Activated B cell treated with CpG ODN at 0.5 μM for 24 hours (primary cell): ENCODE measurements at regions of chr10 and their contacts with region 1.

Region 1: DNA sequence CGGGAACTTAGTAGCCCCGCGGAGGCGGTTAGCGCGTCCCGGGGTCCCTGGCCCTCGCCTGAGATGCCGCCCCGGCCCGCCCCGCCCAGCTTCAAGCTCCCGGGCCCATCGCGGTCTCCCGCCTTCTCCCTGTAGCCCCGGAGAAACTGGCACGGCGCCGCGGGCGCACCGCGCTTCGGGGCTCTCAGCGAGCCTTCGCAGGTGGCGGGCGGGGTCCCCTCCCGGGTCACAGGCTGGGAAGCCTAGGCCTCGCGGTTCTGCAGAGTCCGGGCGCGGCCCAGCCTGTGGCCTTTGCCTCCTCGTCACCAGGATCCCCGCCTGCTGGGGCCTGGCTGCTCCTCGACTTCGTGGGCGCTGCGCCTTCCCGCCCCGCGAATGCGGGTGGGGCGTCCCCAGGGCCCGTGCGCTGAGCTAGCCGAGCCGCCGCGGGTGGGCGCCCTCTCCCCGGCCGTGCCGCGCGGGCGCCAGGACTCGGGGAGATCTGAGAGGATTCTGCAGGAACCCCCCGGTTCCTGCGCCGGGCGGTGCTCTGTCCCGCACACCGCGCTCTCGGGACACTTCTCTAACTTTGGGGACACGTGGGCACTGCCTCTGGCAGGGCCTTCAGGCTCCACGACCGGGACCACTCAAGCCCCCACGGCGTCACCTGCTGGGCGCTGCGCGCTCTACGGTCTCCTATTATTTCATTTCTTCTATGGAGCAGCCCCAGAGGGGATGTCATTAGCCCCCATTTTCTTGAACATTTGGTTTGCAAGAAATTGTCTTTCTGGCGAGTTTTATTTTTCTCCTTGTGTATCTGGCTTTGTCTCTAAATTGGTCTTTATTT is 682 bp upstream of the RGS10 start:
- DNase-seq: peak; percentile 61
- ATAC-seq: peak; percentile 53
- H3K4me3 Mint-ChIP-seq: peak overlapping the region; percentile 91
- H3K27ac Mint-ChIP-seq: peak overlapping the region; percentile 87
- H3K4me1 Mint-ChIP-seq: peaks cover 38% of the 10 kb centered on the region
- H3K27me3 Mint-ChIP-seq: peaks cover 9% of the 10 kb centered on the region
- CTCF ChIP-seq: no peak

Region 2: GRCh38 chr10:118116715-118117449 is 1426.3 kb before region 1 on chr10:
- CTCF ChIA-PET with region 1: no interaction called
- POLR2A ChIA-PET with region 1: no interaction called
- intact Hi-C with region 1: no loop called
- DNase-seq: no peak
- ATAC-seq: no peak
- H3K4me3 Mint-ChIP-seq: no peak overlapping the region
- H3K27ac Mint-ChIP-seq: no peak overlapping the region
- H3K4me1 Mint-ChIP-seq: no peaks in the 10 kb centered on the region
- H3K27me3 Mint-ChIP-seq: peaks cover 5% of the 10 kb centered on the region
- CTCF ChIP-seq: no peak

Region 3: GRCh38 chr10:119178372-119179119 is 364.7 kb before region 1 on chr10 and contains the start of gene PRDX3:
- CTCF ChIA-PET with region 1: no interaction called
- POLR2A ChIA-PET with region 1: no interaction called
- intact Hi-C with region 1: loop called (anchors 5 kb)
- DNase-seq: peak; percentile 92
- ATAC-seq: peak; percentile 99
- H3K4me3 Mint-ChIP-seq: peak within 1 kb of the TSS; percentile 98
- H3K27ac Mint-ChIP-seq: peak within 1 kb of the TSS; percentile 93
- H3K4me1 Mint-ChIP-seq: peaks cover 26% of the 10 kb centered on the region
- H3K27me3 Mint-ChIP-seq: no peaks in the 10 kb centered on the region
- CTCF ChIP-seq: no peak
- total RNA-seq, gene PRDX3: 62.8 and 63.7 TPM in 2 replicates

Region 4: GRCh38 chr10:119416855-119417254 is 126.3 kb before region 1 on chr10:
- CTCF ChIA-PET with region 1: interaction called, 3 read pairs
- POLR2A ChIA-PET with region 1: no interaction called
- intact Hi-C with region 1: loop called (anchors 1 kb)
- DNase-seq: peak; percentile 57
- ATAC-seq: peak; percentile 92
- H3K4me3 Mint-ChIP-seq: no peak overlapping the region
- H3K27ac Mint-ChIP-seq: no peak overlapping the region
- H3K4me1 Mint-ChIP-seq: peaks cover 2% of the 10 kb centered on the region
- H3K27me3 Mint-ChIP-seq: no peaks in the 10 kb centered on the region
- CTCF ChIP-seq: peak; percentile 22

Region 5: DNA sequence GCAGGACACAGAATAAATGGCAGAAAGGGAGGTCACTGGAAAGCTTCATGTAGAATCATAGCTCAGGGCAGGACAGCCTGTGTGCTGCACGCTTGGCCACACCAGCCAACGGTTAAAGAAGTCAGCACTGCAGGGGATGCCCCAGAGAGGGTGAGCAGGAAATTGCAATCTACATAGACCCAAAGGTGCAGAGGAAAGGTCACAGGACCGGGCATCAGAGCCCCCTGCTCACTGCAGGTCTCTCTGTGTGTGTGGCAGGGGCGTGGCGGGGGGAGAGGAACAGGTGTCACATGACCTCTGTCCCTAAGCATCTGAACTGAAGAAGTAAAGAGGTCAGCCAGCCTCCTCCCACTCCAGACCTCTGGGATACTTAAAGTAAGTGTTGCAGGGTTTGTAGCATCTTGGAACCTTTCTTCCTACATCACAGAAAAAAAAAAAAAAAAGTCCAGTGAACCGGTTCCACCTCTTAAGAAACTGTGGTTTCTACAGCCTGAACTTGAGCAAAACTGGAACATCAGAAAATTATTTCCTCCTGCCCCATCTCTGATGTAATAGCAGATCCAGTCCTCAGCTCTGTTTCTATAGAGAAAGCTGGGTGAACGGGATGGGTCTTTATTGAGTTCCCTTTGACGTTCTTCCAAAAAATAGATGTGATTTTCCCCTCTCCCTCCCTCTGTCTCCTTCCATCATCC is 64.9 kb before region 1 on chr10:
- CTCF ChIA-PET with region 1: interaction called, 4 read pairs
- POLR2A ChIA-PET with region 1: no interaction called
- intact Hi-C with region 1: loop called (anchors 1 kb)
- DNase-seq: peak; percentile 66
- ATAC-seq: peak; percentile 96
- H3K4me3 Mint-ChIP-seq: peak overlapping the region; percentile 68
- H3K27ac Mint-ChIP-seq: peak overlapping the region; percentile 93
- H3K4me1 Mint-ChIP-seq: peaks cover 40% of the 10 kb centered on the region
- H3K27me3 Mint-ChIP-seq: no peaks in the 10 kb centered on the region
- CTCF ChIP-seq: no peak

Region 6: DNA sequence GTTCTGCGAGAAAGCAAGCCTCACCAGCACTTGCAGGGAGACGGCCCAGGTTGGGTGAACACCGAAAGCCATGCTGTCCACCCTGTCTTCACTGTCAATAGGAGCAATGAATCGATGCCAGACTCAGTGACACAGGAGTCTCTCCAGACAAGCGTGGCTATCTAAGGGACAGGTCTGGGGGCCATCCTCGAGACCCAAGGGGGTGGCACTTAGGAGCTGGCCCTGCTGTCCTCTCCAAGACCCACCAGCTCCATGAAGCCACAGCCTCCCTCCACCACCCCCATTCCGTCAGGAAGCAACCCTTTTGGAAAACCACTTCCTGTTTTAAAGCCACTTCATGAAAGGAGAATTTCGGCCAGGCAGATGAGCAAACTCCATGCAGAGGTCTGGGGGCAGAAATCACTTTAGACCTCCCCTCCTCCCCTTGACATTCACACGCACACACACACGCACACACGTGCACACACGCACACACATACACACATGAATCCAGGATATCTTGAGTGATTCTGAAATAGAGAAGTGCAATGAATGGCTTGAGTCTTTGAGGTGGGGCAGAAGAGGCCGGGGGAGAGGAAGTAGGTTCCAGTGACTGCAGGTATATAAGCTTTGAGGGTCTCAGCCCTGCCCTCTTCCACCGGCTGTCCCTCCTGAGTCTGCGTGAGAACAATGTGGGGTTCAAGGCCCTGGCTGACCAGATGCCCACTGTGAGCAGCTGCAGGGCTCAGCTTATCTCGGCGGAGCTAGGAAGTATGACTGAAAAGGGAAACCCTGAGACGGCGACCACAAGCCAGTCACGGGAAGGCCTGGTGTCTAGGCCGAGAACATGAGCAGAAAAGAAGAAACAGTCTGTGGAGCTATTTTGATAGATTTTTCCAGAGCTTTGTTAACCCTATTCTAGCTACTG is 25.7 kb before region 1 on chr10:
- CTCF ChIA-PET with region 1: interaction called, 14 read pairs
- POLR2A ChIA-PET with region 1: interaction called, 36 read pairs
- intact Hi-C with region 1: loop called (anchors 1 kb)
- DNase-seq: peak; percentile 59
- ATAC-seq: peak; percentile 71
- H3K4me3 Mint-ChIP-seq: peak overlapping the region; percentile 67
- H3K27ac Mint-ChIP-seq: peak overlapping the region; percentile 94
- H3K4me1 Mint-ChIP-seq: peaks cover 34% of the 10 kb centered on the region
- H3K27me3 Mint-ChIP-seq: no peaks in the 10 kb centered on the region
- CTCF ChIP-seq: no peak

Region 7: GRCh38 chr10:119650692-119651513 is 107.7 kb after region 1 on chr10 and contains the start of gene BAG3:
- CTCF ChIA-PET with region 1: no interaction called
- POLR2A ChIA-PET with region 1: interaction called, 3 read pairs
- intact Hi-C with region 1: loop called (anchors 2 kb)
- DNase-seq: peak; percentile 73
- ATAC-seq: peak; percentile 93
- H3K4me3 Mint-ChIP-seq: peak within 1 kb of the TSS; percentile 97
- H3K27ac Mint-ChIP-seq: peak within 1 kb of the TSS; percentile 95
- H3K4me1 Mint-ChIP-seq: peaks cover 16% of the 10 kb centered on the region
- H3K27me3 Mint-ChIP-seq: no peaks in the 10 kb centered on the region
- CTCF ChIP-seq: no peak
- total RNA-seq, gene BAG3: 4.3 and 4.7 TPM in 2 replicates